Natural killer cell (primary cell): ENCODE measurements at regions of chr10 and their contacts with region 1.

Region 1: GRCh38 chr10:114550756-114551635 is 107.1 kb downstream of the ABLIM1 start:
- DNase-seq: peak in 1 of 2 donors; percentile 58
- ATAC-seq: no peak
- H3K4me3 ChIP-seq: no peak overlapping the region
- H3K4me3 Mint-ChIP-seq: no peak overlapping the region
- H3K27ac ChIP-seq: no peak overlapping the region
- H3K27ac Mint-ChIP-seq: no peak overlapping the region
- H3K4me1 ChIP-seq: peaks cover 17% of the 10 kb centered on the region
- H3K4me1 Mint-ChIP-seq: peaks cover 23 to 30% of the 10 kb centered on the region in 2 donors
- H3K27me3 ChIP-seq: no peaks in the 10 kb centered on the region
- H3K27me3 Mint-ChIP-seq: no peaks in the 10 kb centered on the region
- CTCF ChIP-seq: peak; percentile 71

Region 2: GRCh38 chr10:114173921-114174694 is 376.9 kb before region 1 on chr10 and contains the start of gene CCDC186:
- intact Hi-C with region 1: loop called (anchors 10 kb)
- DNase-seq: peak; percentile 97 to 98
- ATAC-seq: peak; percentile 94 to 100 (median 97)
- H3K4me3 ChIP-seq: peak within 1 kb of the TSS; percentile 88
- H3K4me3 Mint-ChIP-seq: peak within 1 kb of the TSS; percentile 100
- H3K27ac ChIP-seq: peak within 1 kb of the TSS; percentile 90
- H3K27ac Mint-ChIP-seq: peak within 1 kb of the TSS; percentile 98 to 100
- H3K4me1 ChIP-seq: peaks cover 6% of the 10 kb centered on the region
- H3K4me1 Mint-ChIP-seq: peaks cover 42 to 45% of the 10 kb centered on the region in 2 donors
- H3K27me3 ChIP-seq: no peaks in the 10 kb centered on the region
- H3K27me3 Mint-ChIP-seq: peaks cover 10 to 24% of the 10 kb centered on the region in 2 donors
- CTCF ChIP-seq: no peak
- total RNA-seq, gene CCDC186: 51.1 to 66.9 (median 54.0) TPM

Region 3: DNA sequence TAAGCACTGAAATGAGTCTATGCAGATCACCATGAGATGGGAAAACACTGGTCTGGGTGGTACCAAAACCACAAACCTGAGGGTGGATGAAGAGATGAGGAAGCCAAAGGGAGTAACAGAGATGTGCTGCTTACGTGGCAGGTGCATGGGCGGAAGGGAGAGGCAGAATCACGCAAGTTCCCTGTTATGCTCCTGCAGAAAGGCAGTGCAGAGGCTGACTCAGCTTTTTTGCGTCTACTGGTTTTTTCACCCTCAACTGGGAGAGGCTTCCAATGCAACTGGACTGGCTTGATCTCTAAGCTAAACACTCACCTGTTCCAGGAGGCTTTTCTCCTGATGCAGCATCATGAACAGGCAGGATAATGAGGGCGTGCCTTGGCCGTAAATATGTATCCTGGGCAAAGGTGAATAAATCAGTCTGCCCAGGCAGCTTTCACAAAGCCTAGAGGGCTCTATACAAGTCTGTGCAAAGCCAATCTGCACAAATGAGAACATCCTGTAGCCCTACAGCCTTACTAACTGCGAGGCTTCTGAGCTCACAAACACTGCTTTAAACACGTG is 51.3 kb before region 1 on chr10:
- intact Hi-C with region 1: loop called (anchors 10 kb)
- DNase-seq: peak in 1 of 2 donors; percentile 65
- ATAC-seq: peak in 2 of 3 donors; percentile 13 to 40
- H3K4me3 ChIP-seq: no peak overlapping the region
- H3K4me3 Mint-ChIP-seq: no peak overlapping the region
- H3K27ac ChIP-seq: peak overlapping the region; percentile 91
- H3K27ac Mint-ChIP-seq: peak overlapping the region in 1 of 2 donors; percentile 82
- H3K4me1 ChIP-seq: peaks cover 22% of the 10 kb centered on the region
- H3K4me1 Mint-ChIP-seq: peaks cover 46 to 61% of the 10 kb centered on the region in 2 donors
- H3K27me3 ChIP-seq: no peaks in the 10 kb centered on the region
- H3K27me3 Mint-ChIP-seq: no peaks in the 10 kb centered on the region
- CTCF ChIP-seq: no peak

Region 4: GRCh38 chr10:114783686-114784085 is 232.7 kb after region 1 on chr10:
- intact Hi-C with region 1: loop called (anchors 1 kb)
- DNase-seq: no peak
- ATAC-seq: no peak
- H3K4me3 ChIP-seq: no peak overlapping the region
- H3K4me3 Mint-ChIP-seq: no peak overlapping the region
- H3K27ac ChIP-seq: no peak overlapping the region
- H3K27ac Mint-ChIP-seq: no peak overlapping the region
- H3K4me1 ChIP-seq: no peaks in the 10 kb centered on the region
- H3K4me1 Mint-ChIP-seq: no peaks in the 10 kb centered on the region
- H3K27me3 ChIP-seq: no peaks in the 10 kb centered on the region
- H3K27me3 Mint-ChIP-seq: peaks cover 0 to 3% of the 10 kb centered on the region in 2 donors
- CTCF ChIP-seq: no peak

Region 5: GRCh38 chr10:114876602-114877300 is 325.8 kb after region 1 on chr10:
- intact Hi-C with region 1: loop called (anchors 5 kb)
- DNase-seq: peak in 1 of 2 donors; percentile 44
- ATAC-seq: peak in 1 of 3 donors; percentile 49
- H3K4me3 ChIP-seq: no peak overlapping the region
- H3K4me3 Mint-ChIP-seq: no peak overlapping the region
- H3K27ac ChIP-seq: no peak overlapping the region
- H3K27ac Mint-ChIP-seq: no peak overlapping the region
- H3K4me1 ChIP-seq: peaks cover 6% of the 10 kb centered on the region
- H3K4me1 Mint-ChIP-seq: peaks cover 0 to 15% of the 10 kb centered on the region in 2 donors
- H3K27me3 ChIP-seq: no peaks in the 10 kb centered on the region
- H3K27me3 Mint-ChIP-seq: peaks cover 24 to 55% of the 10 kb centered on the region in 2 donors
- CTCF ChIP-seq: no peak